HEK293 (cell line): ENCODE measurements at regions of chr1 and their contacts with region 1.

Region 1: DNA sequence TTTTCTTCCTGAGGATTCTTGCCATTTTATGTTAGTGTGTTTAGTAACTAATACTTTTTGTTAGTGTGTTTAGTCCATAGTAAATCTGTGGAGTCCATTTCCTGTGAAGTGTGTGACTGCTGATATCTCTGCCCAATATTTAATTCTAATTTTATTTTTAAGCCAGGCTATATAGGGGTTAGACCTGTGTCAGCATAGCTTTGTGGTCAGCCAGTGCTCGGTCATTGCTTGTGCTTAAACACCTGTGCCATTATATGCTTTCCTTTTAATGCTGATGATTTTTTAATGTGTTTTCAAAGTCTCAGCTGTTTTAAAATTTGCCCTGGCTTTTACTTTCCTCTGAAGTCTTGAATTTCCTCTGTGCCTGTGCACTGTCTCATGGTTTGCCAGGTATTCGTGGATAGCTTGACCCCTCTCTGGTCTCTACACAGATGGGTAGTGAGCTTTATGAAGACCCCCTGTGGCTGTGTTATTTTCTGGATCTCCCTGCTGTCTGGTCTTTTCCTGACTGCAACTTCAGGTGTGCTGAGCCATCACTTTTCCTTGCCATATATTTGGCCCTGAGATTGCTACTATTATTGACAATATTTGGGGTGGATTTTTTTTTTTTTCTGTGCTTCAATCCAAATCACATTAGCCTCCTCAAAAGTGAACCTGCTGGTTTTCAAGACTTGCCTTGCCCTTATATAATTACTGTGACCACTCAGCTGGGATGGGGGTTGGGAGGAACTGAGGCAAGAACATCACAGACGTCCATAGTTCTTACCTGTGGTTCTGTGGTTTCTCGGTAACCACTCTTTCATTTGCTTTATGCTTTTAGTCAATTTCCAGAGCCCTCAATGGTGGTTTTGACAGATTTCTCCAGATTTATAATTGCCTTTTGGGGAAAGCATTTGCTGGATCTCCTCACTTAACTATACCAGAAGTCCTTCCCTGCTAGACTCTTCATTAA is 59.6 kb downstream of the RPS6KC1 start:
- H3K4me3 ChIP-seq: no peak overlapping the region
- H3K27ac ChIP-seq: no peak overlapping the region
- H3K4me1 ChIP-seq: no peaks in the 10 kb centered on the region
- CTCF ChIP-seq: no peak

Region 2: DNA sequence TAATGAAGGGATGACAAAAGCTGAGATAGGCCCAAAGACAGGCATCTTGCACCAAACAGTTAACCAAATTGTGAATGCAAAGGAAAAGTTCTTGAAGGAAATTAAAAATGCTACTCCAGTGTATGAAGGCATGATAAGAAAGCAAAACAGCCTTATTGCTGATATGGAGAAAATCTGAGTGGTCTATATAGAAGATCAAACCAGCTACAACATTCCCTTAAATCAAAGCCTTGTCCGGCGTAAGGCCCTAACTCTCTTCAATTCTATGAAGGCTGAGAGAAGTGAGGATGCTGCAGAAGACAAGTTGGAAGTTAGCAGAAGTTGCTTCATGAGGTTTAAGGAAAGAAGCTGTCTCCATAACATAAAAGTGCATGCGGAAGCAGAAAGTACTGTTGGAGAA is 90.6 kb before region 1 on chr1:
- CTCF ChIA-PET with region 1: no interaction called
- POLR2A ChIA-PET with region 1: no interaction called
- H3K4me3 ChIP-seq: no peak overlapping the region
- H3K27ac ChIP-seq: no peak overlapping the region
- H3K4me1 ChIP-seq: no peaks in the 10 kb centered on the region
- CTCF ChIP-seq: no peak

Region 3: DNA sequence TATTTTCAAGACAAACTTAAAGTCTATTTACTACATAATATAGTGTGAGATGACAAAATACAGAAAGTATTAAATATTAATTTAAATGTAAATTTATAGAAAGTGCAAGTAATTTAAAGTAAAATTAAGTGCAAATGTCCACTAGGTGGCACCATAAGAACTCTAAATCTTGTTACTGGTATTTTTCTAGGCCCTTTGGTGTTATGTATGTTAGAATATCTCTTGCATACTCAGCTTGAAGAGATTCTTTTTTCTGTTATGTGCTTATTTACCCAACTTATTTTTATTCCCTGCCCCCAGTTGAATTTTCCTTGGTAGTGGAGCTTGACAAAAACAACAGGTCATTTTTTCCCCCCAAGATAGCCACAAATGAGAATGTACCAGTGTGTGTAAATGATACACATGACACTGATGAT is 11.9 kb after region 1 on chr1:
- CTCF ChIA-PET with region 1: interaction called, 22 read pairs
- POLR2A ChIA-PET with region 1: no interaction called
- H3K4me3 ChIP-seq: no peak overlapping the region
- H3K27ac ChIP-seq: no peak overlapping the region
- H3K4me1 ChIP-seq: 0 out of 2 replicates have a peak, but pooled peaks cover 2% of the 10 kb centered on the region
- CTCF ChIP-seq: no peak

Region 4: DNA sequence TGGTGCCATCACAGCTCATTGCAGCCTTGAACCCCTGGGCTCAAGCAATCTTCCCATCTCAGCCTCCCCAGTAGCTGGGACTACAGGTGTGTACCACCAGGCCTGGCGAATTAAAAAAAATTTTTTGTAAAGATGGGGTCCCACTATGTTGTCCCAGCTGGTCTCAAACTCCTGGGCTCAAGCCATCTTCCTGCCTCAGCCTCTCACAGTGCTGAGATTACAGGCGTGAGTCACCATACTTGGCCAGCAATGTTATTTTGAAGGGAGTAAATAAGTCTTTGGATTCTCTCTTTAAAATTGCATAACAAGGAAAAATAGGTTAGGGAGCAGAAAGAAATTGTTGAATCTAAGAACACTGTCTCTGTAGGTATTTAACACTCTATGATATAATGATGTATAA is 51.7 kb after region 1 on chr1:
- CTCF ChIA-PET with region 1: no interaction called
- POLR2A ChIA-PET with region 1: no interaction called
- H3K4me3 ChIP-seq: no peak overlapping the region
- H3K27ac ChIP-seq: no peak overlapping the region
- H3K4me1 ChIP-seq: 0 out of 2 replicates have a peak, but pooled peaks cover 4% of the 10 kb centered on the region
- CTCF ChIP-seq: no peak